ENCODE measurements at regions of chr4 and their contacts with region 1.

Region 1: GRCh38 chr4:185504098-185505047 is 30.9 kb downstream of the PDLIM3 start:
- DNase-seq: peak; percentile 95
- ATAC-seq: peak; percentile 97
- H3K4me3 ChIP-seq: peak overlapping the region; percentile 48 to 57 (median 53)
- H3K27ac ChIP-seq: peak overlapping the region; percentile 70
- H3K4me1 ChIP-seq: peaks cover 56% of the 10 kb centered on the region
- H3K27me3 ChIP-seq: no peaks in the 10 kb centered on the region
- CTCF ChIP-seq: peak; percentile 17; the same call in 1 of the 2 replicates
- EP300 ChIP-seq: peak; percentile 60 to 80
- POLR2A ChIP-seq: no peak
- RAD21 ChIP-seq: no peak; the same call in 1 of the 2 replicates

Region 2: DNA sequence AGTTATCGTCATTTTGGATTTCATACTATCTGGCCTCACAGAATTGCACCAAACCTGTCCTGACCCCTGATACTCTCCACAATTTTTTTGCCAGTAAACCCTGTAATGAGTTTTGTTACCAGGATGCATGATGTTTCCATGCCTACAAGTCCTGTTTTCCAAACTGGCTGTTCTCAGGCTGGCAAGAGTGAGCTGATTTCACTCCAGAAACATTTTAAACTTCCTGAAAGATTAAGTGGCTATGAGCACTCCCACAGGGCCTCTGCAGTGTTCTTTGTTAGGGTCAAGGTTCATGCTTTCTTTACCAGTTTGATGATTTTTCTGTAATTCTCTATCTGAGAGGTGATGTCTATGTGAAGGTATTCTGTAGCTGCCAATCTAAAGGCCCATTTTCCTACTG is 62.6 kb after region 1 on chr4:
- CTCF ChIA-PET with region 1: no interaction called
- POLR2A ChIA-PET with region 1: interaction called, 7 read pairs
- in situ Hi-C with region 1: no loop called
- intact Hi-C with region 1: loop called (anchors 5 kb)
- DNase-seq: peak; percentile 78
- ATAC-seq: peak; percentile 74
- H3K4me3 ChIP-seq: peak overlapping the region in 1 of 3 experiments; percentile 21; a peak in 1 of 6 replicates
- H3K27ac ChIP-seq: peak overlapping the region; percentile 97
- H3K4me1 ChIP-seq: peaks cover 42% of the 10 kb centered on the region
- H3K27me3 ChIP-seq: no peaks in the 10 kb centered on the region; a peak in 1 of 5 replicates
- CTCF ChIP-seq: no peak
- EP300 ChIP-seq: peak in 1 of 2 experiments; percentile 53; a peak in 1 of 4 replicates
- POLR2A ChIP-seq: no peak
- RAD21 ChIP-seq: no peak

Measured in HepG2 (cell line).